Sigmoid colon (tissue), 7 donors: ENCODE measurements at regions of chr1 and their contacts with region 1.

Region 1: GRCh38 chr1:27416387-27417111 is 24.1 kb downstream of the GPR3 start:
- DNase-seq: no peak
- H3K4me3 ChIP-seq: no peak overlapping the region
- H3K27ac ChIP-seq: peak overlapping the region; percentile 81 to 91 (median 85)
- H3K4me1 ChIP-seq: peaks cover 3 to 54% (median 45%) of the 10 kb centered on the region in 4 donors
- H3K27me3 ChIP-seq: no peaks in the 10 kb centered on the region
- CTCF ChIP-seq: peak; percentile 54 to 63 (median 60)
- EP300 ChIP-seq: no peak
- POLR2A ChIP-seq: no peak

Region 2: GRCh38 chr1:27489910-27490741 is 73.6 kb after region 1 on chr1 and contains the start of gene WASF2:
- intact Hi-C with region 1: loop called (anchors 2 kb)
- DNase-seq: peak; percentile 99
- H3K4me3 ChIP-seq: peak within 1 kb of the TSS; percentile 78 to 98 (median 90)
- H3K27ac ChIP-seq: peak within 1 kb of the TSS; percentile 94 to 99 (median 98)
- H3K4me1 ChIP-seq: peaks cover 0 to 57% (median 35%) of the 10 kb centered on the region in 4 donors
- H3K27me3 ChIP-seq: no peaks in the 10 kb centered on the region
- CTCF ChIP-seq: no peak
- EP300 ChIP-seq: peak in 1 of 4 donors; percentile 37
- POLR2A ChIP-seq: peak; percentile 85 to 95
- total RNA-seq, gene WASF2: 43.9 to 63.2 (median 59.9) TPM